MCF 10A (cell line): ENCODE measurements at regions of chr18 and their contacts with region 1.

Region 1: GRCh38 chr18:14086458-14087231 is 45.6 kb downstream of the ZNF519 start:
- DNase-seq: peak; percentile 46
- H3K4me3 Mint-ChIP-seq: no peak overlapping the region
- H3K27ac Mint-ChIP-seq: no peak overlapping the region
- H3K4me1 Mint-ChIP-seq: no peaks in the 10 kb centered on the region
- H3K27me3 Mint-ChIP-seq: no peaks in the 10 kb centered on the region
- CTCF ChIP-seq: peak; percentile 70

Region 2: GRCh38 chr18:13823707-13824395 is 262.8 kb before region 1 on chr18 and contains the start of gene MC5R:
- CTCF ChIA-PET with region 1: interaction called, 124 read pairs
- POLR2A ChIA-PET with region 1: interaction called, 3 read pairs
- intact Hi-C with region 1: loop called (anchors 1 kb)
- DNase-seq: peak; percentile 47
- H3K4me3 Mint-ChIP-seq: peak within 1 kb of the TSS; percentile 38
- H3K27ac Mint-ChIP-seq: no peak within 1 kb of the TSS
- H3K4me1 Mint-ChIP-seq: peaks cover 9% of the 10 kb centered on the region
- H3K27me3 Mint-ChIP-seq: peaks cover 28% of the 10 kb centered on the region
- CTCF ChIP-seq: peak; percentile 90
- total RNA-seq, gene MC5R: not detected in 2 replicates

Region 3: DNA sequence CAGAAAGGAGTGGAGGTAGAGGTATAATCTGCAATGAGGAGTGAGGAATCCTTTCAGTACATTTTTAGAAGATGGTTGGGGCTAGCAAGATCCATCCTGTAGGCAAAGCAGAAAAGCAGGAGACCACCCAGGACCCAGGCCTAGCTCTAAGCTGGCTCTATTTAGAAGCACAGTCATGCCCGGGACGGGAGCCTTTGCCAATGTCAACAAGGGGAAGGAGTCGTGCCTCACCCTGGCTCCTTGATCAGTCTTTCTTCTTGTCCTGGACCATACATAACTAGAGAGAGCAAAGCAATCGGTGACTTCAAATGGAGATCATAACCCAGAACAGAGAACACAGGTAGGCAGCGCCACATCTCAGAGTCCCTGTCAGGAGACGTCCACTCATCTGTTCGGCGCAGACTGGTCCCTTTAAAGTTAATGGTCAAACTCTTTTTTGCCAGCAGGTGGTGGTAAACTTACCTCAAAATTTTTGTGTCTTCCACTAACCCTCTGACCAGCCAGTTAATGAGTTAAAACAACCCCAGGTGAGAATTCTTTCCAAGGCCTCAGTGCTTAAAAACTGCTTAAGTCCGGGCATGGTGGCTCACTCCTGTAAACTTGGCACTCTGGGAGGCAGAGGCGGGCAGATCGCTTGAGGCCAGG is 254.7 kb before region 1 on chr18:
- CTCF ChIA-PET with region 1: interaction called, 70 read pairs
- POLR2A ChIA-PET with region 1: interaction called, 3 read pairs
- intact Hi-C with region 1: no loop called
- DNase-seq: peak; percentile 50
- H3K4me3 Mint-ChIP-seq: no peak overlapping the region
- H3K27ac Mint-ChIP-seq: no peak overlapping the region
- H3K4me1 Mint-ChIP-seq: no peaks in the 10 kb centered on the region
- H3K27me3 Mint-ChIP-seq: peaks cover 33% of the 10 kb centered on the region
- CTCF ChIP-seq: no peak

Region 4: DNA sequence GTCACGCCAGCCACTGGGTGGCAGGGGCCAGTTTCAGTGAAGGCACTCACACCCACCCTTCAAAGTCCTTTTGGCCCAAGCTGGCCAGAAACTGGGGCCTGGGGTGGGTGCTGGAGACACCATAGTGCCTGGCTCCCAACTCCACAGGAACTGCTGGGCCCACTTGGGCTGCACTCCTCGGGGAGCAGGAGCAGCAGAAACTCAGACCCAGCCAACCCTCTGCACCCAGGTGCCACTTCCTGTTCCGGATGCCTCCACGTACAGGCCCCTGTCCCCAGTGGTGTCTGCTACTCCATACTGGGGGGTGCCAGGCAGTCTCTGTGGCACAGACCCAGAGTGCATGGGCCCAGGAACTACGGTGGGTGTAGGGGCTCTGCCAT is 88.1 kb after region 1 on chr18:
- CTCF ChIA-PET with region 1: no interaction called
- POLR2A ChIA-PET with region 1: no interaction called
- intact Hi-C with region 1: no loop called
- DNase-seq: no peak
- H3K4me3 Mint-ChIP-seq: no peak overlapping the region
- H3K27ac Mint-ChIP-seq: no peak overlapping the region
- H3K4me1 Mint-ChIP-seq: peaks cover 6% of the 10 kb centered on the region
- H3K27me3 Mint-ChIP-seq: no peaks in the 10 kb centered on the region
- CTCF ChIP-seq: no peak

Region 5: DNA sequence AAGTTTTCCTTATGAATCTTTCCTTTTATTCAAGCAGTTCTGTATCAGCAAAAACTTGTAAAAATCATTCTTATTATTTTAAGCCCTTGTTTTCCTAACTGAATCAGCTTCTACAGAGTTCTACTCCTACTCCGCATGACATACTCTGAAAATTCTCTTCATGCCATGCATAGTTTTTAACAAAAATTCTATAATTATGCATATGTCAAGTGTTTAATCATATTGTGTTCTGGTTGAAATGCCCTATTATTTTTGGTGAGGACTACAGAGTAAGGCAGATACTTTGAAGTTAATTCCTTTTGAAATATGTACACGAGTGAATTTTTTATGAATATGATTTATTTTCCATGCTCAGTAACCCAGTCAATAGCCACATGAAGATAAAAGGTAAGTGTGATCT is 690.2 kb after region 1 on chr18:
- CTCF ChIA-PET with region 1: no interaction called
- POLR2A ChIA-PET with region 1: no interaction called
- intact Hi-C with region 1: no loop called
- DNase-seq: no peak
- H3K4me3 Mint-ChIP-seq: no peak overlapping the region
- H3K27ac Mint-ChIP-seq: no peak overlapping the region
- H3K4me1 Mint-ChIP-seq: no peaks in the 10 kb centered on the region
- H3K27me3 Mint-ChIP-seq: no peaks in the 10 kb centered on the region
- CTCF ChIP-seq: no peak